ENCODE measurements at regions of chr18 and their contacts with region 1.

Region 1: DNA sequence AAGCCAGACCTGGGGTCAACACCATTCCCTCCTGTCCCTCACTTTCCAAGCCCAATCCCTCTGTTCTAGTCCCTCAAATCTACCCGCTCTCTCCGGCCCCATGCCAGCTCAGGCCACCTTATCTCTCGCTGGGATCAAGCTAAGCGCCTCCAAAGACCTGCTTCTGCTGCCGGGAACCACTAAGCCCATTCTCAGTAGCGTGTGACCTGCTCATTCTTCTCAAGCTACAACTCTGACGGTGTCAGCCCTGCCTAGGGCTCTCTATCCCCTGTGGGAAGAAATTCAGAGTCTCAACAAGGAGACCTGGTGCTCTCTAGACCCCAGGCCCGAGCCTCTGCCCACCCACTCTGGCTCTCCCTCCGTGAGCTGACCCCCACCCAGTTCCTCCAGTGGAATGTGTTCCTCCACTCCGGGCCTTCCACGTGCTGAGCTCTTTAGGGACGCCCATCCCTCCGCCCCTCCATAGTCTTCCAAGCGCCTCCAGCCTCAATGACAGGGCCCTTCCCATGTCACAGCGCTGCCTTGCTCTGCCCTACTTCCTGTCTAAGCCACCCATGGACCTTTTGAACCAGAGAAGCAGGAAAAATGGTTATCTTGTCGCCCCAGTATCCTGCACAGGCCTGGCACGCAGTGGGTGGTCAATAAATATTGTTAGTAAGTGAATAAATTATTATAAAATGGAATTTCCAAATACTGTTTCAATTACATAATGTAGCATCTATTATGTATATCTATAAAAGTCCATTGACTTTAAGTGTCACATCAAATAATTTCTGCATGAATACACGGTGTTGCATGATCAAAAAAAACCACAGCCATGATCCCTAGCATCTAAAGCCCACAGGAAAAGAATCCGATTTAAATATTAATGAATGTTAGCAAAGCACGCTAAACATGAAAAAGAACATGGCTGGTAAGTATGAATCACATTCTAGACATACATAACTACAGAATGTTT is 127.6 kb downstream of the ZNF516 start:
- DNase-seq: peak in 2 of 5 donors; percentile 10 to 21
- H3K4me3 ChIP-seq: no peak overlapping the region
- H3K27ac ChIP-seq: no peak overlapping the region
- H3K4me1 ChIP-seq: peaks cover 12% of the 10 kb centered on the region
- H3K27me3 ChIP-seq: no peaks in the 10 kb centered on the region
- CTCF ChIP-seq: no peak
- EP300 ChIP-seq: no peak
- POLR2A ChIP-seq: no peak

Region 2: DNA sequence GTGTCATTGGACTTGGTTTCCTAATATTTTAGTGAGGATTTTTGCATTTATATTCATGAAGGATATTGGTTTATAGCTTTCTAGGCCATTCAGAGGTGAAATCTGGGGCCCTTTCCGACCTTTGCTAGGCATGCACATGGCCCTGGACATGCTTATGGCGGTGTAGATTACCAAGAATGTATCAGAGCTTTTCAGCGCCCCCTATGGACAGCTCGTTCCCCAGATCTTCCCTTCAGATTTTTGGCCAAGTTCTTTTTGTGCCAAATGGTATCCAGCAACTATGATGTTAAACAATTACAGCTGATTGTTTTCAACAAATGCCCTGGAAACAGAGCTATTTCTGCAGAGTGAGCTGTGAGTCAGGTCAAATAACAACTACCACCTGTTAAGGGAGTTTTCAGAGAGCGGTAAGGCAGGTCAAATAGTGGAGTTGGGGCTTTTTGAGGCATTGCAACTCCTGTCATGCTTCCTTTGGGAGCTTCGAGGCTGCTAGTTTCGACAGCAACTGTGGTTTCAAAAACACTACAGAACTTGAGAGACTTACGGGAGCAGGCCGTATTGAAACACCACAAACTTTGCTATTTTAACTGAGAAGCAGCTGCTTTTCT is 60.7 kb before region 1 on chr18:
- intact Hi-C with region 1: no loop called
- DNase-seq: no peak
- H3K4me3 ChIP-seq: no peak overlapping the region
- H3K27ac ChIP-seq: no peak overlapping the region
- H3K4me1 ChIP-seq: no peaks in the 10 kb centered on the region
- H3K27me3 ChIP-seq: no peaks in the 10 kb centered on the region
- CTCF ChIP-seq: no peak
- EP300 ChIP-seq: no peak
- POLR2A ChIP-seq: no peak

Region 3: DNA sequence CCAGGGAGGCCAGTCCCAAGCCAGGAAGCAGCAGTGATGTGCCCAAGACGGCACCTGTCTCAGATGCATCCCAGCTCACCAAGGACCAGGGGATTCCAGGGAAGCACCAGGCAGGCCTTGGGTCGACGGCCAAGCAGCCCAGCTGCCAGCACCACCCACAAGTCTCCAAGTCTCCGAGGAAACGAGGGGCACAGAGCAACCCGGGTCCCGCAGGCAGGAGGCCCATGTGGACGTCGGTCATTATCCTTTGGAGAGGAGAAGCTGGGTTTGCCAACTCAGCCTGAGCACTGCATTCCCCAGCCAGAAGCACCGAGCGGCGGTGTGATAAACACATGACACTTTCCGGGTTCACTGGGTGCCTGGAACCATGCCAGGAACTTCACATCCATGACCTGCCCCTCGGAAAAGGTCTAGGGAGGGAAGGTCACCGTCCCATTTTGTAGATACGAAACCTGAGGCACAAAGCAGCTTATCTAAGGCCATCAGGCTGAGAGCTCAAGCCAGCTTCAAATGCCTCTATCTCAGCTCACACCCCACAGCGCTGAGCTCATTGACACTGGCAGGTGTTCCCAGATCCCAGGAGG is 23.1 kb after region 1 on chr18:
- intact Hi-C with region 1: loop called in 1 of 4 experiments (anchors 2 kb)
- DNase-seq: peak in 1 of 5 donors; percentile 52
- H3K4me3 ChIP-seq: no peak overlapping the region
- H3K27ac ChIP-seq: peak overlapping the region in 1 of 2 donors; percentile 35
- H3K4me1 ChIP-seq: peaks cover 28% of the 10 kb centered on the region
- H3K27me3 ChIP-seq: no peaks in the 10 kb centered on the region
- CTCF ChIP-seq: no peak
- EP300 ChIP-seq: no peak
- POLR2A ChIP-seq: no peak

Measured in ovary (tissue), 10 donors.